ENCODE measurements at regions of chr2 and their contacts with region 1.

Region 1: GRCh38 chr2:127415593-127416505 is 2.4 kb upstream of the PROC start:
- DNase-seq: peak; percentile 70 to 81
- ATAC-seq: peak; percentile 55 to 83
- H3K4me3 ChIP-seq: peak overlapping the region; percentile 31
- H3K27ac ChIP-seq: peak overlapping the region; percentile 84 to 97
- H3K4me1 ChIP-seq: peaks cover 56% of the 10 kb centered on the region
- CTCF ChIP-seq: peak; percentile 53; the same call in 2 of the 3 replicates
- EP300 ChIP-seq: no peak
- POLR2A ChIP-seq: no peak
- RAD21 ChIP-seq: peak; percentile 59 to 67

Region 2: GRCh38 chr2:127324635-127325034 is 91.2 kb before region 1 on chr2:
- CTCF ChIA-PET with region 1: interaction called, 23 read pairs
- POLR2A ChIA-PET with region 1: interaction called, 3 read pairs
- DNase-seq: peak; percentile 25 to 63
- ATAC-seq: peak; percentile 70 to 85; a peak in 4 of 6 replicates
- H3K4me3 ChIP-seq: no peak overlapping the region
- H3K27ac ChIP-seq: no peak overlapping the region
- H3K4me1 ChIP-seq: peaks cover 12% of the 10 kb centered on the region; the same call in 2 of the 3 replicates
- CTCF ChIP-seq: peak; percentile 83
- EP300 ChIP-seq: no peak
- POLR2A ChIP-seq: no peak
- RAD21 ChIP-seq: peak; percentile 85 to 88

Region 3: DNA sequence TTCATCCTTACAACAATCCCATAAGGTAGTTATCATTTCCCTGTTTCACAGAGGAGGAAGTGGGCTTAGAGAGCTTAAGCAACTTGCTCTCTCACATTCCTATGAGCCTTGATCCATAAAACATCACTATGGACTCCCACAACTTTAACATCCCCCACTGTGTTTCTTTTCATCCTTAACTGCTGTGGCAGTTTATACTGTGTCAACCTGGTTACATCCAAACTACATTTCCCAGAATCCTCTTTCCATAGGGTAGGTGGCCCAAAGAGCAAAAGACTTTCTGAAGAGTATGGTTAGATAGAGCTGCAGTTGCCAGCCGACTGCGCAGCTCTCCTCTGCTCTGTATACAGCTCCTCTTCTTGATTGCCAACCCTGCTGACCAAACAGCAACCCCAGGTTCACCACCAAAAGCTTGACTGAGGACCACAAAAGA is 50.6 kb before region 1 on chr2:
- CTCF ChIA-PET with region 1: interaction called, 14 read pairs
- POLR2A ChIA-PET with region 1: no interaction called
- DNase-seq: no peak
- ATAC-seq: peak; percentile 50 to 75; a peak in 4 of 6 replicates
- H3K4me3 ChIP-seq: no peak overlapping the region
- H3K27ac ChIP-seq: no peak overlapping the region
- H3K4me1 ChIP-seq: peaks cover 45% of the 10 kb centered on the region
- CTCF ChIP-seq: no peak
- EP300 ChIP-seq: no peak
- POLR2A ChIP-seq: no peak
- RAD21 ChIP-seq: no peak

Region 4: DNA sequence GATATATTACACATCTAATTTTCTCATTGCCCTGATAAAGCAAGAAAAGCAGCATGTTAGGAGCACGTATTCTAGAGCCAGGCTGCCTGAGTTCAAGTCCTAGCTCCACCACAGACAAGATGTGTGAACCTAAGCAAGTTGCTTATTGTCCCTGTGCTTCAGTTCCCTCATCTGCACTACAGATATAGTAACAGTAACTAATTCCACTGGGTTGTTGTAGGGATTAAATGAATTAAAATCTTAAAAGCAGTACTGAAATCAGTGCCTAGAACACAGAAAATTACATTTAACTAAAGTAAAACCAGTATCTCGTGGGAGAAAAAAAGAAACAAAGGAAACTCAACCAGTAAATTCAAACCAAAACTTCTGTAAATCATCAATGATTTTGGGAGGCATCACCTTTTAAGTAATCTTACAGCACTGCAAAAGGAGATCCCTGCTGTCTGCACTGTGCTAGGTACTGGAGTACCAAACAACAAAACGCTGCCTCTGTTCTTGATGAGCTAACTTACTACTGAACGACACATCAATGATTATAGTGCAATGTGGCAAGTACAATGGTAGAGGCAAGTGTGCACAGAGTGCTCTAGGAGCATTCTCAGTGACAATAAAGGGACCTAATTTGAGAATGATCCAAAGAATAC is 36.0 kb before region 1 on chr2:
- CTCF ChIA-PET with region 1: interaction called, 10 read pairs
- POLR2A ChIA-PET with region 1: no interaction called
- DNase-seq: no peak
- ATAC-seq: no peak
- H3K4me3 ChIP-seq: no peak overlapping the region
- H3K27ac ChIP-seq: no peak overlapping the region
- H3K4me1 ChIP-seq: peaks cover 41% of the 10 kb centered on the region
- CTCF ChIP-seq: no peak
- EP300 ChIP-seq: no peak
- POLR2A ChIP-seq: no peak
- RAD21 ChIP-seq: no peak

Region 5: DNA sequence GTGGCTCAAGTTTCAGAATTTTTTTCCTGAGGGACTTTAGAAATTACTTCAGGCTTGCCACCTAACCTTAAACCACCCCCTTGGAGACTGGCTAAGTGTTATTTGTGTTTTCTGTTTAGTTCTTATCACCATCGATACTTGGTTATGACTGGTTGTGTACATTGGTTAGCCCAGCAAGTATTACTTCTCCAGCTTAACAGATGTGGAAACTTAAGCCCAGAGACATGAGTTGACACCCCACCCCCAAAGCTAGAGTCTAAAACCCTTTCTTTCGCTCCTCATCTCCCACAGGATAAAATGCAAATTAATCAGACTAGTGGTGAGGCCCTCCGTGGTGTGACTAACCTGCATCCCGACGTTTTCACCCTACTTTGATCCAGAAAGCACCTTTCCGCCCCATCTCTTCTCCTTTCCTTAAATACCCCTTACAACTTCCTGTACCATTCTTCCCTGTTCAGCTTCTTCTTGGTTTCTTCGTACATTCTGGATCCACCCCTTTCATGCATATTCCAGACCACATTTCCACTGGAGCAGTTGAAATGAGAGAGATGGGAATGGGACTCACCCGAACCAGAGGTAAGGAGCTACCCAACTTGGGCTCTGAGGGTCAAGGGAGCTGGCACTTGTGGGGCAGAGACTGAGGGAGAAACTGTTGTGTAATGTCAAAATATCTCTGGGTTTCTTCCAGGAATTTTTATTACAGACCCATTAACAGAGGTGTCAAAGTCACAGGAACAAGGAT is 27.3 kb before region 1 on chr2:
- CTCF ChIA-PET with region 1: interaction called, 15 read pairs
- POLR2A ChIA-PET with region 1: interaction called, 4 read pairs
- DNase-seq: no peak
- ATAC-seq: peak in 1 of 2 experiments; percentile 3; a peak in 3 of 6 replicates
- H3K4me3 ChIP-seq: peak overlapping the region; percentile 38
- H3K27ac ChIP-seq: peak overlapping the region; percentile 82 to 99
- H3K4me1 ChIP-seq: peaks cover 45% of the 10 kb centered on the region
- CTCF ChIP-seq: no peak
- EP300 ChIP-seq: no peak
- POLR2A ChIP-seq: no peak
- RAD21 ChIP-seq: no peak

Measured in A549 (cell line).